A673 (cell line): ENCODE measurements at regions of chr6 and their contacts with region 1.

Region 1: GRCh38 chr6:26122793-26123674 is 35.8 kb downstream of the HFE start:
- DNase-seq: peak; percentile 98
- H3K4me3 ChIP-seq: peak overlapping the region; percentile 81
- H3K27ac ChIP-seq: peak overlapping the region; percentile 91
- H3K4me1 ChIP-seq: peaks cover 16% of the 10 kb centered on the region
- H3K27me3 ChIP-seq: no peaks in the 10 kb centered on the region
- CTCF ChIP-seq: no peak

Region 2: DNA sequence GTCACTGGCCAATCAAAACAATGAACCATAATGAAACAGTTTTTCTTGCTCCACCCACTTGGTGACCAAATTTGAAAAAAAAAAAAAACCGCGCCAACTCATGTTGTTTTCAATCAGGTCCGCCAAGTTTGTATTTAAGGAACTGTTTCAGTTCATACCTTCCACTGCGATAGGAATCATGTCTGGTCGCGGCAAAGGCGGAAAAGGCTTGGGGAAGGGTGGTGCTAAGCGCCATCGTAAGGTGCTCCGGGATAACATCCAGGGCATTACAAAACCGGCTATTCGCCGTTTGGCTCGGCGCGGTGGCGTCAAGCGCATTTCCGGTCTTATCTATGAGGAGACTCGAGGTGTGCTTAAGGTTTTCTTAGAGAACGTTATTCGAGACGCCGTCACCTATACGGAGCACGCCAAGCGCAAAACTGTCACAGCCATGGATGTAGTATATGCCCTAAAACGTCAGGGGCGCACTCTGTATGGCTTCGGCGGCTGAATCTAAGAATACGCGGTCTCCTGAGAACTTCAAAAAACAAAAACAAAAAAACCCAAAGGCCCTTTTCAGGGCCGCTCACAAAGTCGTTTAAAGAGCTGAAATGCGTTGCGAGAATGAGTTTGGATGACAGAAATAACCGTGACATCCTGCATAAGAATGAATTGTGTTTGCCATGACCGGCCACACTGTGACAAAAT is 19.1 kb before region 1 on chr6:
- CTCF ChIA-PET with region 1: interaction called, 11 read pairs
- POLR2A ChIA-PET with region 1: interaction called, 7 read pairs
- intact Hi-C with region 1: no loop called
- DNase-seq: peak; percentile 95
- H3K4me3 ChIP-seq: peak overlapping the region; percentile 46
- H3K27ac ChIP-seq: peak overlapping the region; percentile 79
- H3K4me1 ChIP-seq: peaks cover 11% of the 10 kb centered on the region
- H3K27me3 ChIP-seq: no peaks in the 10 kb centered on the region
- CTCF ChIP-seq: peak; percentile 51

Region 3: DNA sequence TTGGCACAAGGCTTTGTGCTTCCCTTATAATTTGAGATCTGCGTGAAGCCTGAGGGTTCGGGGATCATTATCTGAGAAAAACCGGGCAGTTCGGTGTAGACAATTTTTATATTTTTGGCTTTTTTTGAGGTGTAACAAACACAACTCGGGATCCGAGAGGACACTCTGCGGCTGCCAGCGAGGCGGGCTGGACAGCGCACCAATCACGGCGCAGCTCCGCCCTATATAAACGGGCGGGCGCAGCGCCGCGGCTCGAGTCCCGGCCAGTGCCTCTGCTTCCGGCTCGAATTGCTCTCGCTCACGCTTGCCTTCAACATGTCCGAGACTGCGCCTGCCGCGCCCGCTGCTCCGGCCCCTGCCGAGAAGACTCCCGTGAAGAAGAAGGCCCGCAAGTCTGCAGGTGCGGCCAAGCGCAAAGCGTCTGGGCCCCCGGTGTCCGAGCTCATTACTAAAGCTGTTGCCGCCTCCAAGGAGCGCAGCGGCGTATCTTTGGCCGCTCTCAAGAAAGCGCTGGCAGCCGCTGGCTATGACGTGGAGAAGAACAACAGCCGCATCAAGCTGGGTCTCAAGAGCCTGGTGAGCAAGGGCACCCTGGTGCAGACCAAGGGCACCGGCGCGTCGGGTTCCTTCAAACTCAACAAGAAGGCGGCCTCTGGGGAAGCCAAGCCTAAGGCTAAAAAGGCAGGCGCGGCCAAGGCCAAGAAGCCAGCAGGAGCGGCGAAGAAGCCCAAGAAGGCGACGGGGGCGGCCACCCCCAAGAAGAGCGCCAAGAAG is 33.2 kb after region 1 on chr6:
- CTCF ChIA-PET with region 1: no interaction called
- POLR2A ChIA-PET with region 1: interaction called, 62 read pairs
- intact Hi-C with region 1: loop called (anchors 5 kb)
- DNase-seq: peak; percentile 91
- H3K4me3 ChIP-seq: peak overlapping the region; percentile 89
- H3K27ac ChIP-seq: peak overlapping the region; percentile 99
- H3K4me1 ChIP-seq: peaks cover 12% of the 10 kb centered on the region
- H3K27me3 ChIP-seq: no peaks in the 10 kb centered on the region
- CTCF ChIP-seq: no peak

Region 4: GRCh38 chr6:26183581-26184366 is 60.7 kb after region 1 on chr6:
- CTCF ChIA-PET with region 1: no interaction called
- POLR2A ChIA-PET with region 1: interaction called, 12 read pairs
- intact Hi-C with region 1: no loop called
- DNase-seq: peak; percentile 83
- H3K4me3 ChIP-seq: peak overlapping the region; percentile 33
- H3K27ac ChIP-seq: peak overlapping the region; percentile 68
- H3K4me1 ChIP-seq: peaks cover 10% of the 10 kb centered on the region
- H3K27me3 ChIP-seq: no peaks in the 10 kb centered on the region
- CTCF ChIP-seq: no peak

Region 5: DNA sequence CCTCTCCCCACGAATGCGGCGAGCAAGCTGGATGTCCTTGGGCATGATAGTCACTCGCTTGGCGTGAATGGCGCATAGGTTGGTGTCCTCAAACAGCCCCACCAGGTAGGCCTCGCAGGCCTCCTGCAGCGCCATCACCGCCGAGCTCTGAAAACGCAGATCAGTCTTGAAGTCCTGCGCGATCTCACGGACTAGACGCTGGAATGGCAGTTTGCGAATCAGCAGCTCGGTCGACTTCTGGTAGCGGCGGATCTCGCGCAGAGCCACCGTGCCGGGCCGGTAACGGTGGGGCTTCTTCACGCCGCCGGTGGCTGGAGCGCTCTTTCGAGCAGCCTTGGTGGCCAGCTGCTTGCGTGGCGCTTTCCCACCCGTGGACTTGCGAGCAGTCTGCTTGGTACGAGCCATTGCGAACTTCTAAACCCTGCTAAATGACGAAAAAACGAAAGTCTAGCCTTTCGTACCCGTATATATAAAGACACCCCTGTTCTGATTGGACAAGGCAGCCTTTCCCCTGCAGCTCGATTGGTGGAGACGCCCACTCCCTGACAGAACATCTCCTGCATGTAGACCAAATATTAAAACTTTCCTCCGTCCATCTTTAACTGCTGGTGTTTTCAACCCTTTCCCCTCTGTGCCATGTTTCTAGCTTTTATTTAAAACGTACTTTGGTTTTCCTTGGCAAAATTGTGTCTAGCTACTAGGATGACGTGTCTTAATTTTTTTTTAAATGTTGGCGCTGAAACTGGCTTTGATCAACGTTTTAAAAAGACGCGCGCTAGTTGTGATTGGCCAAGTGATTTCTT is 74.0 kb after region 1 on chr6:
- CTCF ChIA-PET with region 1: no interaction called
- POLR2A ChIA-PET with region 1: interaction called, 31 read pairs
- intact Hi-C with region 1: loop called (anchors 5 kb)
- DNase-seq: peak; percentile 96
- H3K4me3 ChIP-seq: peak overlapping the region; percentile 63
- H3K27ac ChIP-seq: peak overlapping the region; percentile 87
- H3K4me1 ChIP-seq: no peaks in the 10 kb centered on the region
- H3K27me3 ChIP-seq: no peaks in the 10 kb centered on the region
- CTCF ChIP-seq: no peak

Region 6: GRCh38 chr6:26241033-26241895 is 118.2 kb after region 1 on chr6:
- CTCF ChIA-PET with region 1: no interaction called
- POLR2A ChIA-PET with region 1: interaction called, 14 read pairs
- intact Hi-C with region 1: no loop called
- DNase-seq: peak; percentile 53
- H3K4me3 ChIP-seq: peak overlapping the region; percentile 50
- H3K27ac ChIP-seq: peak overlapping the region; percentile 88
- H3K4me1 ChIP-seq: no peaks in the 10 kb centered on the region
- H3K27me3 ChIP-seq: no peaks in the 10 kb centered on the region
- CTCF ChIP-seq: no peak

Region 7: DNA sequence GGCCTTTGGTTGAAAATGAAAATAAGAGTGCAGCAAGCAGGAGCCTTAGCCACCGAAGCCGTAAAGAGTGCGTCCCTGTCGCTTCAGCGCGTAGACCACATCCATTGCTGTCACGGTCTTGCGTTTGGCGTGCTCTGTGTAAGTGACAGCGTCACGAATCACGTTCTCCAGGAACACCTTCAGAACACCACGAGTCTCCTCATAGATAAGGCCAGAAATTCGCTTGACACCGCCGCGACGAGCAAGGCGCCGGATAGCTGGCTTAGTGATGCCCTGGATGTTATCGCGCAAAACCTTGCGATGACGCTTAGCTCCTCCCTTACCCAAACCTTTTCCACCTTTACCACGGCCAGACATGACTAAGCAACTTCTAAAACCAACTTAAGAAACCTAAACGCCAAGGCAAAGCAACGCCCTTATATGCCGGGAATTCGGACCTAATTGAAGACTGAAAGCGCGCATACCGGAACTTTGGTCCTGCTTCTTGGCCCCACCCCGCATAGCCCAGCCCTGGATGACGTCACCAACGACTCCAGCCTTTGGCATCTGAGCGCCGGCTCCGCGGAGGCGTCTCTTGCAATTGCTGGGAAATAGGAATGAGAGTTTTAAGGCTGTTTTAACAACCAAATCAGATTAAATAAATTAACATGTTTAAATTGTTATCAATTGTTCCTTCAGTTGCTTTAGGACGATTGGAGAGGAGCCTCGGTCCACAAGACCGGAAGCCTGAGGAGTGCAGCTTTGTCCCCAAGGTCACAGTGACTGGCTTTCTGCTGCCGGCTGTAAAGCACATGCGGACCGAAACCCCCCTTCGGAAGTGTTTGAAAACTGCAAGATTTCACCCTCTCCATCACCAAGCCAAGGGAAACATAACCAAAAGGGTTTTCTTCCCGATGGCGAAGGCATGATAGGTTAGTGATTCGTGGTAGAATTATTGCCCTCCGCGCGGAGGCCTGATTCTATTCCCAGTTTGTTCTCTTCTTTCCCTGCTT is 162.4 kb after region 1 on chr6:
- CTCF ChIA-PET with region 1: no interaction called
- POLR2A ChIA-PET with region 1: no interaction called
- intact Hi-C with region 1: no loop called
- DNase-seq: peak; percentile 99
- H3K4me3 ChIP-seq: peak overlapping the region; percentile 57
- H3K27ac ChIP-seq: peak overlapping the region; percentile 92
- H3K4me1 ChIP-seq: peaks cover 3% of the 10 kb centered on the region
- H3K27me3 ChIP-seq: no peaks in the 10 kb centered on the region
- CTCF ChIP-seq: no peak